Aorta (tissue), 5 donors: ENCODE measurements at regions of chr3 and their contacts with region 1.

Region 1: GRCh38 chr3:46065294-46065721 is 38.0 kb upstream of the XCR1 start:
- DNase-seq: peak in 1 of 2 donors; percentile 58
- ATAC-seq: no peak
- H3K4me3 ChIP-seq: no peak overlapping the region
- H3K27ac ChIP-seq: no peak overlapping the region
- H3K4me1 ChIP-seq: peaks cover 0 to 5% of the 10 kb centered on the region in 2 donors
- H3K27me3 ChIP-seq: no peaks in the 10 kb centered on the region

Region 2: GRCh38 chr3:45995236-45996192 is 69.8 kb before region 1 on chr3 and contains the start of gene FYCO1:
- intact Hi-C with region 1: no loop called
- DNase-seq: peak; percentile 97 to 98
- ATAC-seq: peak; percentile 96
- H3K4me3 ChIP-seq: peak within 1 kb of the TSS; percentile 77 to 92
- H3K27ac ChIP-seq: peak within 1 kb of the TSS; percentile 80
- H3K4me1 ChIP-seq: peaks cover 0 to 9% of the 10 kb centered on the region in 2 donors
- H3K27me3 ChIP-seq: no peaks in the 10 kb centered on the region
- total RNA-seq, gene FYCO1: 75.5 to 91.8 TPM

Region 3: DNA sequence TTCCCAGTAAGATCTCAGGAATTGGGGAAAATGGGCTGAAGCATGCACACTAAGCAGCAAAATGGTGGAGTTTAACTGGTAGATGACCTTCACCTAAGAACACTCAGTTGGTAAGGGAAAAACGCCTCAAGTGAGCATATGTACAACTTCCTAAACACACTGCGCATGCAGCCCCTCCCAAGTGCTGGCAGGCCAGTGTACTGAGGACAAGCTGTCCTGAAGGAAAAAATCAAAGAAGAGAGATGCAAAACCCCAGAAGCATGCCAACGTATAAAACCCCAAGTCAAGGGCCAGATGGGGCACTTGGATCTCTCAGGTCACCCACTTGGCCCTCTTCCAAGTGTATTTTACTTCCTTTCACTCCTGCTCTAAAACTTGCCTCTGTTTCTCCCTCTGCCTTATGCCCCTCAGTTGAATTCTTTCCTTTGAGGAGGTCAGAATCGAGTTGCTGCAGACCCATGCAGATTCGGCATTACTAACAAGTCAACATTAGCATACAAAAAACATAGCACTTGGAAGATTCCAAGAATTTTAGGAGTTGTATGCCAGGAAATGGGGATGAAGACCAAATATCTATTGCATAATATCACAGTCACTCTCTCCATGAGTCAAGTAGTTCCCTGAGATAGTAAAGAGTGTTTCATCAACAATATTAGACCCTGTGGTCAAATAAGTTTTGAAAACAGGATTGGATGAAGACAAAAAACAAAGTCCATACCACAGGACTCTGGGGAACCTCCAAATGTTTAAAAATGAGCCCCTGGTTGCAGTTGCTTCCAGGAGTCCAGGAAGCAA is 58.9 kb before region 1 on chr3:
- intact Hi-C with region 1: loop called in 1 of 2 experiments (anchors 5 kb)
- DNase-seq: no peak
- ATAC-seq: peak; percentile 73
- H3K4me3 ChIP-seq: no peak overlapping the region
- H3K27ac ChIP-seq: no peak overlapping the region
- H3K4me1 ChIP-seq: no peaks in the 10 kb centered on the region
- H3K27me3 ChIP-seq: no peaks in the 10 kb centered on the region